ENCODE measurements at regions of chr10 and their contacts with region 1.

Region 1: GRCh38 chr10:22259280-22259679 is 41.5 kb upstream of the EBLN1 start:
- DNase-seq: no peak
- H3K4me3 ChIP-seq: no peak overlapping the region
- H3K27ac ChIP-seq: no peak overlapping the region
- H3K4me1 ChIP-seq: no peaks in the 10 kb centered on the region
- H3K27me3 ChIP-seq: no peaks in the 10 kb centered on the region
- CTCF ChIP-seq: no peak
- EP300 ChIP-seq: no peak
- POLR2A ChIP-seq: no peak

Region 2: DNA sequence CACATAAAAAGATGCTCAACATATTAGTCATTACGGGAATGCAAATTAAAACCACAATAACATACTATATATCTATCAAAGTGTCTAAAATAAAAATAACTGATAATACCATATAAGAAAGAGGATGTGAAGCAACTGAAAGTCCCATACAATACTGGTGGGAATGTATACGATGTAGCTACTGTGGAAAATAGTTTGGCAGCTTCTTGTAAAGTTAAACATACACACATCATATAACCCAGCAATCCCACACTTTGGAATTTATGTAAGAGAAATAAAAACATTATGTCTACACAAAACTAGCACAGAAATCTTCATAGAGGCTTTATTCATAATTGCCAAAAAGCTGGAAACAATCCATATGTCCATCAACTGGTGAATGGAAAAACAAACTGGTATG is 46.4 kb after region 1 on chr10:
- intact Hi-C with region 1: loop called (anchors 2 kb)
- DNase-seq: no peak
- H3K4me3 ChIP-seq: no peak overlapping the region
- H3K27ac ChIP-seq: no peak overlapping the region
- H3K4me1 ChIP-seq: no peaks in the 10 kb centered on the region
- H3K27me3 ChIP-seq: no peaks in the 10 kb centered on the region
- CTCF ChIP-seq: no peak
- EP300 ChIP-seq: no peak
- POLR2A ChIP-seq: no peak